Endothelial cell of umbilical vein (primary cell): ENCODE measurements at regions of chr1 and their contacts with region 1.

Region 1: GRCh38 chr1:19456968-19457441 is 28.3 kb downstream of the CAPZB start:
- DNase-seq: peak; percentile 44
- H3K4me3 ChIP-seq: no peak overlapping the region
- H3K27ac ChIP-seq: peak overlapping the region; percentile 33
- H3K4me1 ChIP-seq: peaks cover 44% of the 10 kb centered on the region
- H3K27me3 ChIP-seq: no peaks in the 10 kb centered on the region
- CTCF ChIP-seq: no peak
- POLR2A ChIP-seq: no peak

Region 2: GRCh38 chr1:19341201-19342072 is 115.6 kb before region 1 on chr1:
- CTCF ChIA-PET with region 1: no interaction called
- POLR2A ChIA-PET with region 1: no interaction called
- dilution Hi-C with region 1: no loop called
- intact Hi-C with region 1: no loop called
- DNase-seq: peak; percentile 72
- H3K4me3 ChIP-seq: no peak overlapping the region
- H3K27ac ChIP-seq: no peak overlapping the region
- H3K4me1 ChIP-seq: peaks cover 4% of the 10 kb centered on the region
- H3K27me3 ChIP-seq: no peaks in the 10 kb centered on the region
- CTCF ChIP-seq: peak; percentile 91 to 92
- POLR2A ChIP-seq: no peak

Region 3: DNA sequence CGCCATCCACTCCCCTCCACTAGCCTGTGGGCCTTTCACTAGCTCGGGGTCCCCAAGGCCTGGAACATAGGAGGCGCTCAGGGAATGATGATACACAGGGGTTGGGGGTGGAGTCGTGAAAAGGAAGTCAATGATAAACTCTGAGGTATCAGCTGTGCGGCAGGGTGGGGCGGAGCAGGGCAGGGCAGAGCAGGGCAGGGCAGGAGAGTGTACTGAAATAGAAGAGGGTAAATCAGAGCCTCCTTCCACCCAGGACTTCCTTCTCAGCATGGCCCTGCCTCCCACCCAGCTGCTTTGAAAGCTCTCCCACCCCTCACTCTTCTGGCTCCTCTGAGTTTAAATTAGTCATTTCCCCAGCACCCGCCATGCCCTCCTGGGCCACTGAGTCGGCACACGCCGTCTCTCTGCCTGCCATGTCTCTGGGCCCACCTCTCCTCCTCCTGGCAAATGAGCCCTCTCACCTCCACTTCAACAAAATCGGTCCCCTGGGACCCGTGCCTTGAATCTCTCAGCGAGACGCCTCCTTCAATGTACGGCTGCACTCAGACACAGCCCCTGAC is 11.5 kb after region 1 on chr1:
- CTCF ChIA-PET with region 1: interaction called, 13 read pairs
- POLR2A ChIA-PET with region 1: no interaction called
- dilution Hi-C with region 1: no loop called
- intact Hi-C with region 1: no loop called
- DNase-seq: no peak
- H3K4me3 ChIP-seq: no peak overlapping the region
- H3K27ac ChIP-seq: peak overlapping the region; percentile 60
- H3K4me1 ChIP-seq: peaks cover 20% of the 10 kb centered on the region
- H3K27me3 ChIP-seq: no peaks in the 10 kb centered on the region
- CTCF ChIP-seq: no peak
- POLR2A ChIP-seq: no peak

Region 4: DNA sequence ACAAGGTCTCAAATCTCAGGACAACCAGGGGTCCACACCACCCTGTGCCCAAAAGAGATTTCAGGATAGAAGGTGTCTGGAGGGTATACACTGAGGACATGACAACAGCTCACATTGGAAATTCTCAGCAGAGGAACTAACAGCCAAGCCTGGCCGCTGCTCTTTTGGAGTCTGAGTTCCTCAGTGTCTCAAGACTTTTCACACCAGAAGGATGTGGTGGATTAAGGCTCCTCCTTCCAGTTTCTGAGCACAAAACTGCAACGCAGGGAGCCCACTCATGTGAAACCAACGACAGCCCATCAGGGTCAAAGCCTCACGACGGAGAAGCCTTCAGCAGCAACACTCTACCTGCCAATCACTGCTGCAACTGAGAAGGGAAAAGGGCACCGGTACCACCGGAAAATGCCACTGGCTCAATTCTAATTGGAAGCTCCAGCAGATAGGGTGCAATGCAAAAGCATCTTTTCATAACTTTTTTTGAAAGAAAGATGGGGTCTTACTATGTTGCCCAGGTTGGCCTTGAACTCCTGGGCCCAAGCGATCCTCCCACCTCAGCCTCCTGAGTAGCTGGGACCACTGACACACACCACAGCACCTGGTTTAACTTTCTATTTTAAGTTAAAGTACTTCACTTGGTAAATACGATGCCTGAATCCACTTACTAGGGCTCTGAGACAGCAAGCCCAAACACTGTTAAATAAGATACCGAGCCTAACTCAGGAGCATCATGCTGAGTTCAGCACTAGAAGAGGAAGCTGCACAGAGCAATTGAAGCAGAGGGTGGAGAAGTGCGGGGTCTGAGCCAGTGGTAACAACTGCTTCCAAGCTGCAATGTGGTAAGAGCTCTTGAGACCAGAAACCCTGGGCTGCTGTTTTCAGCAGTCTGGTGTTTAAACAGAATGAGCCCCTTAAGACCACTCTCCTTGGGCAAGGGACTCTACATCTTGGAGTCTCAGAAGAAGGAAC is 20.6 kb after region 1 on chr1:
- CTCF ChIA-PET with region 1: no interaction called
- POLR2A ChIA-PET with region 1: no interaction called
- dilution Hi-C with region 1: no loop called
- intact Hi-C with region 1: loop called (anchors 2 kb)
- DNase-seq: peak; percentile 43
- H3K4me3 ChIP-seq: no peak overlapping the region
- H3K27ac ChIP-seq: peak overlapping the region; percentile 58
- H3K4me1 ChIP-seq: peaks cover 50% of the 10 kb centered on the region
- H3K27me3 ChIP-seq: no peaks in the 10 kb centered on the region
- CTCF ChIP-seq: no peak
- POLR2A ChIP-seq: no peak

Region 5: GRCh38 chr1:19661721-19662228 is 204.8 kb after region 1 on chr1:
- CTCF ChIA-PET with region 1: no interaction called
- POLR2A ChIA-PET with region 1: interaction called, 10 read pairs
- dilution Hi-C with region 1: no loop called
- intact Hi-C with region 1: no loop called
- DNase-seq: peak; percentile 57
- H3K4me3 ChIP-seq: no peak overlapping the region
- H3K27ac ChIP-seq: no peak overlapping the region
- H3K4me1 ChIP-seq: peaks cover 3% of the 10 kb centered on the region
- H3K27me3 ChIP-seq: peaks cover 26 to 38% of the 10 kb centered on the region in 2 experiments
- CTCF ChIP-seq: peak; percentile 36 to 56
- POLR2A ChIP-seq: no peak